WTC11 (cell line): ENCODE measurements at regions of chr7 and their contacts with region 1.

Region 1: DNA sequence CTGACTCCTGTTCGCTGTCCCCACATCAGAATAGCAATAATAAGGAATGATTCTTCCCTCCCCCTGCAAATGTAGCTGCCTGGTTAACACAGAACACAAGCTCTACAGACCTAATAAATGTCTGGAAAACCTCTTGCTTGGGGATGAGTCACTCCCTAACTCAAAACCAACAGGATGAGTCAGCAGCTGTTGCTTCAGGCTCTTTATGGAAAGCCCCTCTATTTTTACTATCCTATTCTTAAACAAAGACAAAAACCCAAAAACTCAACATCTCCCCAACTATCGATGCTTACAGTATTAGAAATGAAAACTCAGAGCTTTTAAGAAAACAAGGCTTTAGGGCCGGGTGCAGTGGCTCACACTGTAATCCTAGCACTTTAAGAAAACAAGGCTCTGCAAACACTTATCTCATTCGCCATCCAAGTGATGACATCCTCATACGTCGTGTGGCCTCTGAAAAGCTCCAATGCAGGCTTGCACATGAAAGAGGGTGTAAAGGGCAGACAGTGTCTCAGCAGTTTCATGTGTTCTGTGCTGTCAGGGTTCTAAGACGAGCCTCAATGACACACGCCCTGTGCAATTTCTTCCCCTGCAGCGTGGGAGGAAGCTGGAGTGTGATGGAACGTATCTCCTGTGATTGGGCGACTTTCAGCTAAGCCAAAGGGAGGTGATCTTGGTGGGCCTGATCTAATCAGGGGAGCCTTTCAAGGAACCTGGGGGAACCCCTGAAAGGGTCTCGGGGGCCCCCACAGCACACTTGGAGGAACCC is 70.1 kb downstream of the AMZ1 start:
- DNase-seq: no peak
- ATAC-seq: no peak
- H3K4me3 Mint-ChIP-seq: no peak overlapping the region
- H3K27ac Mint-ChIP-seq: peak overlapping the region; percentile 21
- H3K4me1 Mint-ChIP-seq: peaks cover 43% of the 10 kb centered on the region
- H3K27me3 Mint-ChIP-seq: no peaks in the 10 kb centered on the region
- CTCF ChIP-seq: no peak

Region 2: DNA sequence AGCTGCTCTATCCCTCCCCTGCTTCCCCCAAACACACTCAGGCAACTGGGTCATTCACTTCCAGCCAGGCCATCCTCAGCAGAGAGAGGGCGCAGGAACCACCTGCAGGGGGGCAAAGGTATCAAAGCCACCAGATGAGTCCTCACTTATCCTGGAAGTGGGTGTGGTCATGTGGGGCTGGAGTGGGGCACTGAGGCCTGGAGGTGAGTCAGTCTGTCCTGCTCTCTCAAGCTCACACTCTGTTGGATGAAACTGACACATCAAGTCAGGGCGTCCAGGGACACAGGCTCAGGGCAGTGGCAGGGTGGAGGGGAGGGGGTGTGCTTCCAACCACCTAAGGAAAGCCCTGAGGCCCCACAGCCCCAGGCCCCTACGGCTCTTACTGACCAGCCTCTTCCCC is 1096.0 kb before region 1 on chr7:
- CTCF ChIA-PET with region 1: no interaction called
- POLR2A ChIA-PET with region 1: no interaction called
- DNase-seq: peak; percentile 10
- ATAC-seq: no peak
- H3K4me3 Mint-ChIP-seq: no peak overlapping the region
- H3K27ac Mint-ChIP-seq: no peak overlapping the region
- H3K4me1 Mint-ChIP-seq: peaks cover 4% of the 10 kb centered on the region
- H3K27me3 Mint-ChIP-seq: peaks cover 51% of the 10 kb centered on the region
- CTCF ChIP-seq: no peak

Region 3: DNA sequence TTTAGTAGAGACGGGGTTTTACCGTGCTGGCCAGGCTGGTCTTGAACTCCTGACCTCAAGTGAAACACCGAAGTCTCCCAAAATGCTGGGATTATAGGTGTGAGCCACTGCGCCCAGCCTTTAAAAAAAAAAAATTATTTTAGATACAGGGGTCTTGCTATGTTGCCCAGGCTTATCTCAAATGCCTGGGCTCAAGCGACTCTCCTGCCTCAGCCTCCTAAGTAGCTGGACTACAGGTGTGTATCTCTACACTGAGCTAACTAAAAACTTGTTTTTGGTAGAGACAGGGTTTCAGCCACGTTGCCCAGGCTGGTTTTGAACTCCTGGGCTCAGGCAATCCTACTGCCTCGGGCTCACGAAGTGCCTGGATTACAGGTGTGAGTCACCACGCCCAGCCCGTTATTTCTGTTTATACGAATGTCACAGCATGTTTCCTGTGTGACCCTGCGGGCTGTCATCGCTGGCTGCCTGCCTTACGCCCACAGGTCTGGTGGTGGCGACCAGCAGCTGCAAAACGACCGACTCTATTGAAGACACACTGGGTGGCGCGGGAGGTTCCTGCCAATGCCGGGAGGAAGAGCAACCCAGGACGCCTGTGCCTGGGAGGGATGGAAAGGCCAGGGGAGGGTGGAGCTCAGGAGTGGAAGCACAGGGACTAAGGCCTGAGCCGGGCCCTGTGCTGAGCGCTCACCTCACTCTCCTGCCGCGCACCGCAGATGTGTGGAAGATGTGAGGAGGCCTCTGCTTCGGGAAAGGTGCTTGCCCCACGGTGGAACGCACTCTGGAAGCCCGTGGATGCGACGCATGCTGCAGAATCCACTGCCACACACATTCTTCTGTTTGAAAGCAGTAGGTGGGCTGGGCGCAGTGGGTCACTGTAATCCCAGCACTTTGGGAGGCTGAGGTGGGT is 37.3 kb before region 1 on chr7:
- CTCF ChIA-PET with region 1: interaction called, 17 read pairs
- POLR2A ChIA-PET with region 1: no interaction called
- DNase-seq: no peak
- ATAC-seq: peak; percentile 10; the same call in 1 of the 2 replicates
- H3K4me3 Mint-ChIP-seq: no peak overlapping the region
- H3K27ac Mint-ChIP-seq: peak overlapping the region; percentile 63
- H3K4me1 Mint-ChIP-seq: peaks cover 3% of the 10 kb centered on the region; the same call in 1 of the 2 replicates
- H3K27me3 Mint-ChIP-seq: no peaks in the 10 kb centered on the region
- CTCF ChIP-seq: no peak

Region 4: GRCh38 chr7:2732959-2733584 is 25.0 kb before region 1 on chr7:
- CTCF ChIA-PET with region 1: interaction called, 12 read pairs
- POLR2A ChIA-PET with region 1: no interaction called
- DNase-seq: peak; percentile 9
- ATAC-seq: no peak
- H3K4me3 Mint-ChIP-seq: no peak overlapping the region
- H3K27ac Mint-ChIP-seq: peak overlapping the region; percentile 91
- H3K4me1 Mint-ChIP-seq: peaks cover 39% of the 10 kb centered on the region
- H3K27me3 Mint-ChIP-seq: no peaks in the 10 kb centered on the region
- CTCF ChIP-seq: no peak

Region 5: GRCh38 chr7:2779086-2779485 is 21.0 kb after region 1 on chr7:
- CTCF ChIA-PET with region 1: interaction called, 10 read pairs
- POLR2A ChIA-PET with region 1: no interaction called
- DNase-seq: no peak
- ATAC-seq: no peak
- H3K4me3 Mint-ChIP-seq: no peak overlapping the region
- H3K27ac Mint-ChIP-seq: peak overlapping the region; percentile 69; the same call in 1 of the 2 replicates
- H3K4me1 Mint-ChIP-seq: peaks cover 30% of the 10 kb centered on the region
- H3K27me3 Mint-ChIP-seq: no peaks in the 10 kb centered on the region
- CTCF ChIP-seq: no peak

Region 6: GRCh38 chr7:2824678-2825461 is 66.8 kb after region 1 on chr7:
- CTCF ChIA-PET with region 1: interaction called, 15 read pairs
- POLR2A ChIA-PET with region 1: interaction called, 3 read pairs
- DNase-seq: peak; percentile 66
- ATAC-seq: peak; percentile 79
- H3K4me3 Mint-ChIP-seq: peak overlapping the region; percentile 66
- H3K27ac Mint-ChIP-seq: peak overlapping the region; percentile 98
- H3K4me1 Mint-ChIP-seq: peaks cover 92% of the 10 kb centered on the region
- H3K27me3 Mint-ChIP-seq: no peaks in the 10 kb centered on the region
- CTCF ChIP-seq: no peak